MCF 10A (cell line): ENCODE measurements at regions of chr6 and their contacts with region 1.

Region 1: DNA sequence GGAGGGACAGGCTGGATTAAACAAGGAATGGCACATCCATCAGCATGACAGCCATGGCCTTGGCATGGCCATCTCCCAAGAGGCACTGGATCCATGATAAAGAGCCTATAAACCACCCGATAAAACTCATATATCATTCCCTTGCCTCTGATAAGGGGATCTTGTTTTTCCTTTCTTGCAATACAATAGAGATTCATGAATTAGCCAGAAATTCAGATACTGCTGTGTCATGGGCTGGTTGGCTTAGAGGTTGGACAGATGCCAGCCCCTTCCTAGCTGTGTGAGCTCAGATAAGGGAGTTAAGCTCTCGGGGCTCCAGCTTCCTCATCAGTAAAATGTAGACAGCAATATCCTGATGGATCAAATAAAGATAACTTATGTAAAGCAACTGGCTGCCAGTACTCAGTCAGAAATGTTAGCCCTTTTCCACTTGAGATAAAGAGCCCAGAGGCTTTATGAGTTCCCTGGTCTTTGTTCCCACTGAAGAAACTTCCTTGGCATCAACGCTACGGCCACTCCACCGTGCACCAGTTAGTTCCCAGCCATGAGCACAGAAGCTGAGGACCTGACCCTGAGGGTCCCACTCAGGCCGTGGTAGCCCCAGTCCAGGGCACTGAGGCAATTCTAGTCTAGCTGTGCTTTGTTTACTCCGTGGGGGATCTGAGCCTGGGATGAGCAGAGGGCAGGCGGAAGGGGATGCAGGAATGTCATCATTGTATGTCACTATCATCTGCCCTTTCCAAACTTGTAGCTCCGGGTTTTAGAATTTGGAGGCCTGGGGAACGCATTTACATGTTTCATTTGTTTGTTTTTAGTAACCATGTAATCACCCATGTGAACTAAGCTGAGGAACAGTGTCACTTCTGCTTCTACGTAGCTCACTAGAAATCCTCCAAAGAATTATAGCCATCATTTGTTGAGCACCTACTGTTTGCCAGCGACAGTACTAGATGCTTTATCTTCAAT is 67.2 kb upstream of the TBC1D7 start:
- DNase-seq: peak; percentile 75
- H3K4me3 Mint-ChIP-seq: no peak overlapping the region
- H3K27ac Mint-ChIP-seq: peak overlapping the region; percentile 21
- H3K4me1 Mint-ChIP-seq: peaks cover 33% of the 10 kb centered on the region
- H3K27me3 Mint-ChIP-seq: no peaks in the 10 kb centered on the region
- CTCF ChIP-seq: no peak

Region 2: DNA sequence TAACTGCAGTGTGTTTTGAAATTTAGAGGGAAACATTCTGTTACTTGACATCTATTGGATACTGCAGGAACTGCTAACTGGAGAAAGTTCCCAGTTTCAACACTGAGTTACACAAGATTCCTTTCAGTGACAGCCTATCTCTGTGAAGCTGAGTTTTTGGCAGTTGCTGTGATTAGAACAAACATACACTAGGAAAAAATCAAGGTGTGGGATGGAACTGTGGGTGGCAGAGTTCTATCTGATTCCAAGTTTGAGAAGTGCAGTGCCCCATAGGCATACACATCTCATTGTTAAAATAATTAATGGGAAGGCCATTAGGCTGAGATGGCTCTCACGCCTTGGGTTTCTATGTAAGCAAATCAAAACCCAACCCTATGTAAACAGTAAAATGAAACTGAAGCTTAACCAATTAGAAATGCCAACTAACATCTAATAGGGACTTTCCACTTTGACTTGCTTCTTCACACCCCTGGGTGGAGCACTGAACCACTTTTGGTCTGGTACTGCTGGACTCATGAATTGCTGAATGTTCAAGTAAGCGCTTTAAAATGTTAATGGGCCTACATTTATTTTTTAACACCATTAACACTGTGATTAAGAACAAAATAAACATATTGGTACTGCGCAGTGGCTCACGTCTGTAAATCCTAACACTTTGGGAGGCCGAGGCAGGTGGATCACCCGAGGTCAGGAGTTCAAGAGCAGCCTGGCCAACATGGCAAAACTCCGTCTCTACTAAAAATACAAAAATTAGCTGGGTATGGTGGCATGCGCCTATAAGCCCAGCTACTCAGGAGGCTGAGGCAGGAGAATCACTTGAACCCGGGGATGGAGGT is 12.0 kb before region 1 on chr6:
- CTCF ChIA-PET with region 1: interaction called, 15 read pairs
- POLR2A ChIA-PET with region 1: interaction called, 3 read pairs
- intact Hi-C with region 1: no loop called
- DNase-seq: peak; percentile 55
- H3K4me3 Mint-ChIP-seq: peak overlapping the region; percentile 32
- H3K27ac Mint-ChIP-seq: peak overlapping the region; percentile 59
- H3K4me1 Mint-ChIP-seq: peaks cover 10% of the 10 kb centered on the region
- H3K27me3 Mint-ChIP-seq: no peaks in the 10 kb centered on the region
- CTCF ChIP-seq: peak; percentile 23

Region 3: DNA sequence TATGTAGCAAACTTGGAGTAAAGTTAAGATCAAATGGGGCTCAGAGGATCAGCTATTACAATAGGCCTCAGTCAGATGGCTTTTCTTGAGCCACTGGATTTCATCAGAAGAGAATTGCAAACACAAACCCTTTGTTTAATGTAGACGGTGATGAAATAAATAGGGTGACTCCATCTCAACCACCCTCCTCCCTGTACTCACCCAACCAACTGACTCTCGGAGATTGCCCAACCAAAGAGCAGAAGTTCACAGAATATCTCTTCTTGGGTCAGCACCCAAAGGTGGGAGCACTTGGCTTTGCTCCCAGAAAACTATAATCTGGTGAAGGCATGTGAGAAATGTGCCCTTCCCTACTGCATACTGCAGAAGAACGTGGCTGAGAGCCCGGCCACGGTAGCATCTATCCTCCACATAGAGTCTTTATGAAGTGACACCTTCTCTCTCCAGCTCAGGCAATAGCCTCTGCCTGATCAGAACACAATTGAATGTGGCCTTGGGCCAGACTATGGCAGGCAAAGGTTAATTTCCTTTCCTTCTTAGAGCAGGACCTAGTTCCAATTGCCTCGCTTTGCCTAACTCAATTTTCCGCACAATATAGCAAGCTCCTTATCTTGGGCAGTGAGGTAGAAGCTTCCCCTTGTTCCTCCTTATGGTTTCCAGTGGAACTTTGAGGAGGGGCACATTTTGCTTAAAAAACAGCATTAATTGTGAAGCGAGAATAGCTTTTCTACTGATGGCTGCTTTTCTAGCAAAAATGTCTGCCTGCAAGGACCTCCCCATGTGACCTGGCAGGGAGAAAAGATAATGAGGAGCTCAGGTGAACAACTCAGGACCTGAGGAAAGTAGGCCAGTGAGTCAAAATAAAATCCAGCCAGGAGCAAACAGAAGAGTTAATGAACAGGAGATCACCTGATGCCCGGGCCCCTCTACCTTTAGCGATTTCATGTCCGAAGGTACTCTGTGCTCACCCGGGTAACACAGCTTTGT is 12.4 kb after region 1 on chr6:
- CTCF ChIA-PET with region 1: interaction called, 14 read pairs
- POLR2A ChIA-PET with region 1: interaction called, 10 read pairs
- intact Hi-C with region 1: no loop called
- DNase-seq: peak; percentile 99
- H3K4me3 Mint-ChIP-seq: peak overlapping the region; percentile 33
- H3K27ac Mint-ChIP-seq: peak overlapping the region; percentile 85
- H3K4me1 Mint-ChIP-seq: peaks cover 52% of the 10 kb centered on the region
- H3K27me3 Mint-ChIP-seq: no peaks in the 10 kb centered on the region
- CTCF ChIP-seq: no peak